Left ventricle myocardium superior (tissue), 1 donor: ENCODE measurements at regions of chr1 and their contacts with region 1.

Region 1: GRCh38 chr1:21334214-21335087 is 44.2 kb upstream of the ECE1 start:
- DNase-seq: peak; percentile 70
- ATAC-seq: peak; percentile 32

Region 2: DNA sequence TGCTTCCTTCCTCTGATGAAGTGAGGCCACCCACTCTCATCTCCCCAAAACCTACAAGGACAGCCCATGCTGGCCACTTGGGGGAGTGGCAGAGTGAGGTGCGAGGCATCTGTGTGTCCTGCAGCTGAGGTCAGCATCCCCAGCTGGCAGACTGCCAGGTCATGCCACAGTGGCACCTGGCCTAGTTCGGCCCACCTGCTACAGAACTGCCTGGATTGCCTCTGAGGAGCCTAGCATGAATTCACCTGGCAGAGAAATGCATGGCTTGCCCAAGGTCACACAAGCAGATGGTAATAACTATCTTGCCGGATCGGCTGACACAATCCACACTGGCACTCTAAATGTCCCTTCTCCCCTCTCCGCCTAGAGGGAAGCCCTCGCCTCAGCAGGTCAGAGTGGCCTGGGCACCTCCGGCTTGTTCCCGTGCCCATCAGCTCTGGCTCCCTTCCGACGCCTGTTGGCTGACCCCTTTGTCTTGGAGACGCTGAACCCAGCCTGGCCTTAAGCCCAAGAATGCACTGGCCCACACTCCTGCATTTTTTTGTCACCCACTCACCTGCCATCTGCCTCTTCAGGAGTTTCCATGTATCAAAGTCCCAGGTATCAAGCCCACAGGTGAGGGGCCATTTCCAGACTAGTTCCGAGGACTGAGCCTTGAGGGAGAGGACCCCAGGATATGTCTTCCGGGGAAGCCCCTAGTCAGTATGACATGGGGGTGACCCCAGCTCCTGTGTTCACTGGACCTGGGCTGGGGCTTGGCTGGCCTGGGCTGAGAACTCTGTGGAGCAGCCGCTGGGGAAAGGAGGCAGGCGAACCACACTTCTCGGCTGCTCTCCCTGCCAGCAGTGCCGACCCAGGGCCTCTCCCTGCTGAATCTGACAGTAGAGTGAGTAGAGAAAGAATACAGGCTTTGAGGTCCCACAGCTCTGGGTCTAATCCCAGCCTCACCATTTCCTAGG is 65.9 kb before region 1 on chr1:
- intact Hi-C with region 1: loop called (anchors 5 kb)
- DNase-seq: peak; percentile 68
- ATAC-seq: peak; percentile 52

Region 3: DNA sequence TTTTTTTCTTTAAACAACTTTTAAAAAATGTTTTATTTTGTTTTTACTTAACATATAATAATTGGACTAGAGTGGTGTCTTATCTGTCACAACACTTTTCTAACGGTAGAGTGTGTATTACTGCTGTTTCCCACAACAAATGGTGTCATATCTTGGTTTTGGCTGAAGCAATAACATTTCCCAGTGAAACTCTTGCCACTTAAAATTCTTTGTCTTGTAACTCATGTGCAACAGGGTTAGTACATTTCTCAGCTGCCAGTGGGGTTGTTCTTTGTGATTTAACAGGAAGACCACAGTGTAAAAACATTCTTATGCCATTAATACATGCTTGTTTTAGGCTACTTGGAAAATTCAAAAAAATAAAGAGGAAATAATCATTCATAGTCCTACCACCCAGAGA is 218.3 kb after region 1 on chr1:
- intact Hi-C with region 1: no loop called
- DNase-seq: no peak
- ATAC-seq: peak; percentile 85